PC-9 (cell line): ENCODE measurements at regions of chr5 and their contacts with region 1.

Region 1: DNA sequence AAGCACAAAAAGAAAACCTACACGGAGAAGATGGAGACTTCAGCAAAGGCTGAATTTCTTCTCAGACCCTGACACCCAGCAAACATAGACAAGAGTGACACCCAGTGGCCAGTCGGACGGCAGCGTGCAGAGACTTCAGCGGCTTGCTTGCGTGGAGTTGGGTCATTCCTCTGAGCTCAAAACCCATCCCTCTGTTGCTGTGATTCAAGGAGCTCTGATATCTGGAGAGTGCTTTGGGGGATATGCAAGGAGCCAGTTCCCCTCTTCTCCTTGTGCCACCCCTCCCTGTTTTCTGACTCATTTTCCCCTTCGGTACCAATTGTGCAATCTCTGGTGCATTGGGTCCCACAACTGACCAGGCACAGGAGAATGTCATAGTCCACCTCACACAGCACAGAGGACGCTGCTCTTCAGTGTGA is 27.5 kb downstream of the SH3TC2 start:
- DNase-seq: peak; percentile 66 to 79
- H3K4me3 ChIP-seq: no peak overlapping the region
- H3K27ac ChIP-seq: peak overlapping the region; percentile 1; the same call in 1 of the 2 replicates
- H3K4me1 ChIP-seq: peaks cover 58% of the 10 kb centered on the region
- H3K27me3 ChIP-seq: no peaks in the 10 kb centered on the region
- CTCF ChIP-seq: peak; percentile 90

Region 2: DNA sequence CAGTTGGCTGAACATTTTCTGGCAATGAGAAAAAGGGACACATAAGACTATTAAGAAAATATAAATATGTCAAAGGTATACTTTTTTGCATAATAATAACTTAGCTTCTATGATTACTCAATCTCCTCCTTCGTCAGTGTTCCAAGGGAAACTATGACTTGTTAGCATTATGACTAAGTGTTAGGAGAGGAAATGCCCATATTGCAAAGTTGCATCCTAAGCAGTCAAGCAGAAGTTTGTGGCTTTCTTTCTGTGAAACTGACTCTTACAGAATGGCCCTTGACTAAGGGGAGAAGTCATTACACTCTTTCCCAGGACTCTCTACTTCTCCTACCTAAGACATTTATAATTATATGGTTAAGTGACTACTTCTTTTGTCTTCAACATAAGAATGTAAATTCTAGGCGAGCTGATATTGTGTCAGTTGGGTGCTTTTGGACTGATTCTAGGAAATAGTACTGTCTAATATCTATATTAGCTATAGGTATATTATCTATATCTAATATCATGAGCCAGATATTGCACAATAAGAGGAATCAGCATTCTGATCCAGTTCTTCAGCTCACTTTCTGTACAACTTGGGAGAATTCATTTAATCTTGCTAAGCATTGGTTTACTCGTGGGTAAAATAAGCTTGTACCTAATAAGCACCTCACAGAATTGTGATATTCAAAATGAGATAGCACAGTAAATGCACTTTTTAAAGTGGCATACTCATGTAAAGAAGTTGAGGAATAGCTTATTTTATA is 849.0 kb before region 1 on chr5:
- CTCF ChIA-PET with region 1: no interaction called
- POLR2A ChIA-PET with region 1: no interaction called
- intact Hi-C with region 1: loop called (anchors 10 kb)
- DNase-seq: peak in 1 of 2 experiments; percentile 75
- H3K4me3 ChIP-seq: no peak overlapping the region
- H3K27ac ChIP-seq: peak overlapping the region; percentile 69
- H3K4me1 ChIP-seq: peaks cover 18% of the 10 kb centered on the region; the same call in 1 of the 2 replicates
- H3K27me3 ChIP-seq: no peaks in the 10 kb centered on the region
- CTCF ChIP-seq: no peak

Region 3: DNA sequence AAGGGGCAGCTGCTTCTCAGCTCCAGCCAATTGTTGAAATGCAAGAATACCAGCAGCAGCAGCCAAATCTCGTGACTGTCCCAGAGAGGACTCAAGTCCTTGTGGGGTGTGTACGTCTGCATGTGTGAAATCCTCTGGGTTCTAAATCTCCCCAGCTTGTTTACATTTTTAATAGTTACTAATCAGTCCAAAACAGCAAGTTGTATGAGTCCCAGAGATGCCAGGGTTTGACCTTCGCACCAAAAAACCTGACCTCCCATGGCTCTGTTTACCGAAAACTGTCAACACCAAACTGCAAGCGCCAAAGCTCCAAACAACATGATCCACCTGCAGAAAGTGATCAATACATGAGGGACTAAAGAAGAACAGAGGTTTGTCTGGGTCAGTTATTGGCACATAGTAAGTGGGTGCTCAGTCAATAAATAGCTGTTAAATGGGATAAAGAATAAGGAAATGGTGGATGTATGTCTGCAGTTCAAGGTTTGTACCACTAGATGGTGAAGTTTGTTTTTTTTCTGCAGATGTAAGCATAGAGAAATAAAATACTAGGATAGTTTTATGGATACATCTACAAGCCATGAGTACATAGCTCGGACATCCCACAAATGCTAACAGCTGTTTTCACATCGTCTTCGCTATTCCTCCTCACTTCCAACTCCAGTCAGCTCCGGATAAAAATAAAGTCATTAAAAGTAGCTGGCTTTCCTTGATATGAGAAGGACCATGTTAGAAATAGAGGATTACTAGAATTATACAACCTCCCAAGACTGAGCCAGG is 294.2 kb before region 1 on chr5:
- CTCF ChIA-PET with region 1: interaction called, 20 read pairs
- POLR2A ChIA-PET with region 1: no interaction called
- intact Hi-C with region 1: no loop called
- DNase-seq: peak in 1 of 2 experiments; percentile 65
- H3K4me3 ChIP-seq: no peak overlapping the region
- H3K27ac ChIP-seq: no peak overlapping the region
- H3K4me1 ChIP-seq: peaks cover 14% of the 10 kb centered on the region
- H3K27me3 ChIP-seq: no peaks in the 10 kb centered on the region
- CTCF ChIP-seq: peak; percentile 93

Region 4: GRCh38 chr5:148957591-148958202 is 77.7 kb before region 1 on chr5:
- CTCF ChIA-PET with region 1: interaction called, 3 read pairs
- POLR2A ChIA-PET with region 1: no interaction called
- intact Hi-C with region 1: loop called (anchors 1 kb)
- DNase-seq: peak; percentile 35 to 45
- H3K4me3 ChIP-seq: no peak overlapping the region
- H3K27ac ChIP-seq: no peak overlapping the region
- H3K4me1 ChIP-seq: peaks cover 35% of the 10 kb centered on the region
- H3K27me3 ChIP-seq: no peaks in the 10 kb centered on the region
- CTCF ChIP-seq: peak; percentile 97

Region 5: DNA sequence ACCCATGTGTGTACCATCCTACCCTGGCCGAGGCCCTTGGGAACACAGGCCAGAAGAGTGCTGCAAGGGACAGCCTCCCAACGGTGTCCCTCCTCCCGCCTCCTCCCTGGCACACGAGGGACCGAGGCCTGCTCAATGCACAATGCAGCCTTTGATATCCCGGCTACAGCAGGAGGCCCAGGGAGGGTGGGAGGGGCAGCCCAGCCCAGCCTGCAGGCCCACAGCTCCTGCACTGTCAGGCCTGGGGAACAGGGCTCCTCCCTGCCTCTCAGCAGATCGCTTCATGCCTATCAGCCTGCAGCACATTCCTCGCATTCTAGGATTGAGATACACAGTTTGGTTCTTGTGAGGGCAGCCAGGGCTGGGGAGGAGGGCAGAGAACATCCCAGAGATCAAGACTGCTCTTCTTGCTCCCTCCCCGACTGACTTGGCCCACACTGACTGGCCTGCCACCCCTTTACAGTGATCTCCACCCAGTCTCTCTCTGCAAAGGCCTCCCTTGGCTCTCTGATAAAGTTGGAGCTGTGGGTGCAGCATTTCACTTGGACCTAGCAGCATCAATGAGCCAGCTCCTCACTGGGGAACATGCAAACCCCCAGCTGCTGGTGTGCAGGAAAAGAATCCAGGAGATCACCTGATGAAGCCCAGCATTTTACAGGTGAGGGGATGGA is 27.8 kb after region 1 on chr5 and contains the start of gene SH3TC2:
- CTCF ChIA-PET with region 1: no interaction called
- POLR2A ChIA-PET with region 1: no interaction called
- intact Hi-C with region 1: loop called (anchors 2 kb)
- DNase-seq: peak; percentile 81 to 90
- H3K4me3 ChIP-seq: peak within 1 kb of the TSS; percentile 46; the same call in 1 of the 2 replicates
- H3K27ac ChIP-seq: peak within 1 kb of the TSS; percentile 99
- H3K4me1 ChIP-seq: peaks cover 68% of the 10 kb centered on the region
- H3K27me3 ChIP-seq: no peaks in the 10 kb centered on the region
- CTCF ChIP-seq: no peak
- total RNA-seq, gene SH3TC2: 32.1 and 38.8 TPM in 2 replicates

Region 6: GRCh38 chr5:149228618-149229297 is 193.4 kb after region 1 on chr5:
- CTCF ChIA-PET with region 1: no interaction called
- POLR2A ChIA-PET with region 1: no interaction called
- intact Hi-C with region 1: loop called (anchors 5 kb)
- DNase-seq: peak; percentile 40 to 53
- H3K4me3 ChIP-seq: no peak overlapping the region
- H3K27ac ChIP-seq: no peak overlapping the region
- H3K4me1 ChIP-seq: peaks cover 18% of the 10 kb centered on the region
- H3K27me3 ChIP-seq: no peaks in the 10 kb centered on the region
- CTCF ChIP-seq: peak; percentile 68